Naive thymus-derived CD4-positive, alpha-beta T cell (primary cell): ENCODE measurements at regions of chr18 and their contacts with region 1.

Region 1: GRCh38 chr18:57004366-57005121 is 142.3 kb upstream of the BOD1L2 start:
- DNase-seq: no peak
- ATAC-seq: peak; percentile 67
- H3K4me3 ChIP-seq: no peak overlapping the region
- H3K4me3 Mint-ChIP-seq: peak overlapping the region in 2 of 10 donors; percentile 35 to 37
- H3K27ac ChIP-seq: no peak overlapping the region
- H3K27ac Mint-ChIP-seq: peak overlapping the region in 5 of 9 donors; percentile 41 to 74 (median 46)
- H3K4me1 ChIP-seq: peaks cover 0 to 11% of the 10 kb centered on the region in 2 donors
- H3K4me1 Mint-ChIP-seq: peaks cover 7 to 33% (median 25%) of the 10 kb centered on the region in 7 donors
- H3K27me3 ChIP-seq: no peaks in the 10 kb centered on the region
- H3K27me3 Mint-ChIP-seq: no peaks in the 10 kb centered on the region

Region 2: DNA sequence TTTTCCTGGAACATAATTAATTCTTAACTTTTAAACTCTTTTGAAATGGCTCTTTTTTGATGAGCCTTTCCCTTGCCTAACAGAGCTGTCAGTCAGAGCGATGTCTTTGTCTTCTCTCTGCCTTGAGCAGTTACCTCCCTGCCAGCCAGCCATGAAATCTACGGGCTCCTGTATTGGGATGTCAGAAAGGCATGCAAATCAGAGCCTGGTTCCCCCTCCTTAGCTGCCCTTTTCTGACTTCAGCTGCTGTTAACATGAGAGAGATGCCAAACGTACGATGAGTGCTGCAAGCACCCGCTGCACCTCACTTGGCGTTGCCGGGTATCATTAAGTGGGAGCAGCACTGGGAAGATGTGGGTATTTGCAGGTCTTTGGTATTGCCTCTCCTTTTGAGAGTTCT is 10.9 kb after region 1 on chr18:
- CTCF ChIA-PET with region 1: interaction called, 3 read pairs
- POLR2A ChIA-PET with region 1: no interaction called
- intact Hi-C with region 1: loop called in 1 of 2 experiments (anchors 1 kb)
- DNase-seq: no peak
- ATAC-seq: no peak
- H3K4me3 ChIP-seq: no peak overlapping the region
- H3K4me3 Mint-ChIP-seq: no peak overlapping the region
- H3K27ac ChIP-seq: no peak overlapping the region
- H3K27ac Mint-ChIP-seq: peak overlapping the region in 1 of 9 donors; percentile 72
- H3K4me1 ChIP-seq: peaks cover 0 to 8% of the 10 kb centered on the region in 2 donors
- H3K4me1 Mint-ChIP-seq: peaks cover 8 to 44% (median 32%) of the 10 kb centered on the region in 7 donors
- H3K27me3 ChIP-seq: no peaks in the 10 kb centered on the region
- H3K27me3 Mint-ChIP-seq: no peaks in the 10 kb centered on the region

Region 3: DNA sequence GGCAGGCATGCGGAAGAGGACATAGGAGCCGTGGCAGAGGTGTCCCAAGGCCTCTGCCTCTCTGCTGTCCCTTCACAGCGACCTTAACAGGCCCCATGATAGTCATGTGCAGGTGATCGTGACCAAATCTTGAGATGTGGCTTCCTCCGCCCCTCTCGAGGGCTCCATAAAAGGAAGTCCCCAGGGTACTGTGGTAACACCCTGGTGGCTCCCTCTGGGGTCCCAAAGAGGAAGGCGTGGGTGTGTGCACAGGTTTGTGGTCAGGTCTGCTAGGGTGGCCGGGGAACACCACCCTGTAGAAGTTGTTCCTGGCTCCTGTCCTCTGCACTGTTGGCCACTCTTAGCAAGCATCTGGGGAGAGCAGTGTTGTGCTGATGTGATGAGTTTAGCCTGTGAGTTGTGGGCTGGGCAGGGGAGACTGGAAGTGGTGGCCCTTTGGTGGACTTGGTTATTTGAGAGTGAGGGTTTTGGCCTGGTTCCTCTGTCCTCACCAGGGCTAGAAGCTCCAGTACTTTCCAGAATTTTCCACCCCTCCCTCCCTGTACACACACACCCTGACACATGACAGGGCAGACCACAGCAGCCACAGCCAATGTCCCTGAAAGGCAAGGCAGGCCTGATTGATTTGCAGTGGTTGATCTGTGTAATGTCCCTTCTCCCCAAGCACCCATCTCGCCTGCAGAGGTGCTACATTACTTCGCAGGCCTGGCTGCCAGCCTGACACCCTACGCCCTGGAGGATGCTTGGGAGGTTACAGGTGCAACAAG is 73.4 kb after region 1 on chr18:
- CTCF ChIA-PET with region 1: no interaction called
- POLR2A ChIA-PET with region 1: no interaction called
- intact Hi-C with region 1: no loop called
- DNase-seq: peak in 1 of 9 donors; percentile 37
- ATAC-seq: peak; percentile 60
- H3K4me3 ChIP-seq: no peak overlapping the region
- H3K4me3 Mint-ChIP-seq: peak overlapping the region in 2 of 10 donors; percentile 41 to 67
- H3K27ac ChIP-seq: no peak overlapping the region
- H3K27ac Mint-ChIP-seq: no peak overlapping the region
- H3K4me1 ChIP-seq: peaks cover 0 to 9% of the 10 kb centered on the region in 2 donors
- H3K4me1 Mint-ChIP-seq: peaks cover 0 to 10% (median 8%) of the 10 kb centered on the region in 7 donors
- H3K27me3 ChIP-seq: no peaks in the 10 kb centered on the region
- H3K27me3 Mint-ChIP-seq: peaks cover 3 to 20% (median 9%) of the 10 kb centered on the region in 5 donors